ENCODE measurements at regions of chr6 and their contacts with region 1.

Region 1: GRCh38 chr6:97068211-97068610 is 143.7 kb downstream of the KLHL32 start:
- DNase-seq: no peak
- H3K4me3 ChIP-seq: no peak overlapping the region
- H3K27ac ChIP-seq: peak overlapping the region in 8 of 59 donors; percentile 0 to 62 (median 5)
- H3K27me3 ChIP-seq: no peaks in the 10 kb centered on the region
- CTCF ChIP-seq: peak; percentile 29 to 80 (median 62)

Region 2: DNA sequence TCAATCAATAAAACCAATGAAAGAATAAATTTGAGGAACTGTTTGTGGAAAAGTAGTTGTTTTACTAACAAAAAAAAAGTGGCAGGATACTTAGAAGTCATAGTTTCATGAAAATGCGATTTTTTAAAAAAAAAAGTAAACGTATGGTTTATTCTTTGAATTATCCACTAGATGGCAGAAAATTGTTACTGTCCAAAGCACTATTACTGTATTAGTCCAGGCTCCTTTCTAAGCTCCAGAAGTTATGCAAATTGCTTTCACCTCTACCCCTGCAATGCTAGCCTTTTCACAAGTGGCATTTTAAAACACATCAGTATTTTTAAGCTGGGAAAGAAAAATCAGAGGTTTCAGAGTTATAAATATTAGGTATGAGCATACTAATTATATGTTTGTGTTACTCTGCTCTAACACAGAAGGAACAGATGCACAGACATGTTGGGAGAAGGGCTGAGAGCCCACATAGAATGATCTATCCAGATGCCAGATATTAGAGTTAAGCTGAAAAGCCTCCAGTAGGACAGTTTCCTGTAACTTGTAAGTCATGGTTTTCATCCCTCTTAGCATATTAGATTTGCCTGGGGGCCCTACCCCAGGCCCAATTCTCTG is 441.3 kb before region 1 on chr6:
- intact Hi-C with region 1: loop called in 1 of 2 experiments (anchors 5 kb)
- DNase-seq: no peak
- H3K4me3 ChIP-seq: no peak overlapping the region
- H3K27ac ChIP-seq: no peak overlapping the region
- H3K27me3 ChIP-seq: no peaks in the 10 kb centered on the region
- CTCF ChIP-seq: peak; percentile 22 to 77 (median 56)

Region 3: DNA sequence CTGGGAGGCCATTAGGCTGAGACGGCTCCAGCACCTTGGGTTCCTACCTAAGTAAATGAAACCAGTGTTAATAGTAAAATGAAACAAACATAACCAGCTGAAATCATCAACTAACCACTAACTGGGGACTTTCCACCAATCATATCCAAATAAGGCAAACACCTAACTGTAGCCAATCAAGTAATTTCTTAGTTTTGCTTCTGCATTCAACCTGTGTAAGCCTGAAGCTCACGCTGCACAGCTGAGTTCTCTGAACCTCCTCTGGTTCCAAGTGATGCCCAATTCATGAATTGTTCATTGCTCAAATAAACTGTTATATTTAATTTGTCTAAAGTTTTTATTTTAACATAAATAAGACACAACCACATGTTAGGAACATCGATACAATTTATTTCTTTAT is 121.2 kb before region 1 on chr6:
- intact Hi-C with region 1: no loop called
- DNase-seq: no peak
- H3K4me3 ChIP-seq: no peak overlapping the region
- H3K27ac ChIP-seq: peak overlapping the region in 6 of 59 donors; percentile 1 to 60 (median 17)
- H3K27me3 ChIP-seq: no peaks in the 10 kb centered on the region
- CTCF ChIP-seq: no peak

Region 4: DNA sequence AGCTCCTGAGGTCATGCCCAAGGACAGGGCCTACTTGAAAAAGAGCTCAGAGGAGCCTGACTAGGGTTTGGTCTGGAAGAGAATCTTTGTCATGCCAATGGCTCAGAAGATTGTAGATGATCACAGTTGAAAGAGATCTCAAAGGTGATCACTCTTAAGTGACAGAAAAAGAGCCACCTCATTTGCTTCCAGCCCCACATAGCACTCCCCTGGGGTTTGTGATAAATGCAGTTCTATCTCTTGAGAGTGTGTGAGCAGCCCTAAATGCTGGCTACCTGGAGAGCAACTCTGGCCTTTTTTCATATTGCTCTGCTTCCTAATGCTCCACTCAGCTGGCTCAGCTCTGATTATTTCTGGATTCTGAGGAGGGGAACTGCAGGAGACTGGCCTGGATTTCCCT is 104.4 kb before region 1 on chr6:
- intact Hi-C with region 1: no loop called
- DNase-seq: no peak
- H3K4me3 ChIP-seq: no peak overlapping the region
- H3K27ac ChIP-seq: peak overlapping the region in 35 of 59 donors; percentile 2 to 66 (median 32)
- H3K27me3 ChIP-seq: no peaks in the 10 kb centered on the region
- CTCF ChIP-seq: no peak

Region 5: GRCh38 chr6:97186416-97186999 is 118.3 kb after region 1 on chr6:
- intact Hi-C with region 1: loop called in 1 of 2 experiments (anchors 10 kb)
- DNase-seq: peak; percentile 37 to 88 (median 64)
- H3K4me3 ChIP-seq: no peak overlapping the region
- H3K27ac ChIP-seq: no peak overlapping the region
- H3K27me3 ChIP-seq: no peaks in the 10 kb centered on the region
- CTCF ChIP-seq: peak; percentile 80 to 99 (median 92)

Region 6: DNA sequence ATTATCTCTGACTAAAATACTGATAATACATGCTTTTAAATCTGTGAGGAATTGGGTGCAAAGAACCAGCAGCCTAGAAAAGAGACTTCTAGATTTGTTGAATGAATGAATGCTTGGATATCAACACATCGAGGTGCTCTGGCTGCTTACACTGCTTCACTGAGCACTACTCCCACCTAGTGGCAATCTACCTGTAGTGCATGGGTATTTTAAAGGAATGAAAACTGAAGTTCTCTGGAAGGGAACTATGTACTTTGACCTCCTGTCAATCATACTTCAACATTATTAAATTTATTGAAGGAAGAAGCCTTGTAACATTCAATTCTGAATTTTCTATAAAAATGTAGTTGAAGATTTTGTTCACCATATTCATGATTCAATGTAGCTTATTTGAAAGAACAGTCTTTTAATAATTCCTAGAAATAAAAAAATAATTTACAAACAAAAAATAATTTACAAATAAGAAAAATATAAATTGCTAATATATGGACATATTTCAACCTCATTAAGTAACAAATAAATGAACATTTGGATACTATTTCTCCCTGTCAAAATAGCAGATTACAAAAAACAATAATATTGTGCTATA is 326.0 kb after region 1 on chr6:
- intact Hi-C with region 1: loop called in 1 of 2 experiments (anchors 2 kb)
- DNase-seq: peak in 4 of 10 donors; percentile 8 to 38 (median 20)
- H3K4me3 ChIP-seq: no peak overlapping the region
- H3K27ac ChIP-seq: no peak overlapping the region
- H3K27me3 ChIP-seq: no peaks in the 10 kb centered on the region
- CTCF ChIP-seq: peak; percentile 75 to 98 (median 90)